ENCODE measurements at regions of chr12 and their contacts with region 1.

Region 1: GRCh38 chr12:104177663-104178501 is 37.7 kb upstream of the TXNRD1 start:
- DNase-seq: peak; percentile 87 to 88
- ATAC-seq: peak; percentile 89
- H3K4me3 ChIP-seq: no peak overlapping the region
- H3K27ac ChIP-seq: peak overlapping the region in 1 of 2 donors; percentile 62
- H3K4me1 ChIP-seq: peaks cover 0 to 5% of the 10 kb centered on the region in 2 donors
- H3K27me3 ChIP-seq: no peaks in the 10 kb centered on the region

Region 2: DNA sequence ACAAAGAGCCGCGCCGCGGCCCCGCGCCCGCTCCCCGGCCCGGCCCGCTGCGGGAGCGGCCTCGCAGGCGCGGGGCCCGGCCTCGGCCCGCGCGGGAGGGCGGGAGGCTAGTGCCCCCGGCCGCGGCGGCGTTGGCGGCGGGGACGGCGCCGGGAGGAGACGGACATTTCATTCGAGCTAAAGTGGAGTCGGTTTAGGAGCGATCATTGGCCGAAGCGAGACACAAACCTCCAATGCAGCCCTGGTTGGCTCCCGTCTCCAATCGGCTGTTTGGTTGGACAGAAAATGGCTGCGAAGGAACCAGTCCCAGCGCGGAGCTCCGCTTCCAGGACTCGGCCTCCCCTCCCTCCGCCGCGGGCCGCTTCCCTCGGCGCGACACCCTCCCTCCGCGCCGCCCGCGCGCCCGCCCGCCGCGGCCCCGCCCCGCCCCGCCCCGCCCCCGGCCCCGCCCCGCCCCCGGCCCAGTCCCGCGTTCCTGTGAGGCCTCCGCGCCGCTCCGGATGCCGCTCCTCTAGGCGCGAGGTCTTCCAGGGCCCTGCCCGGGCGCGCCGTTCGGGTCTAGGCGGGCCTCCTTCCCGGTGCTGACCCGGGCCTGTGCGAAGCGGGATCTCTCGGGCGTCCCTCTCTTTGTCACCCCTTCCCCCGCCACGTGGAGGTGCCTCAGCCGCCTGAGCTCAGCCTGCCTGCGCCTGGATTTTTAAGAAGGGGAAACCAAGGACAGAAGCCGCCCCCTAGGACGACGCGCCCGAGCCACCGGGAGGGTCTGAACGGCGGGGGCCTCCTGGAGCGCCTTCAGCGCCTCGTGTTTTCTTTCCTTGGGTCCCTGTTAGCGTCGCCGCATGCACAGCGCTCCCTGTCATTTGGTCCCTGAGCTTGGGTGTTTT is 39.7 kb before region 1 on chr12 and contains the start of gene NFYB:
- intact Hi-C with region 1: loop called (anchors 5 kb)
- DNase-seq: peak; percentile 95 to 97
- ATAC-seq: peak; percentile 95
- H3K4me3 ChIP-seq: peak within 1 kb of the TSS; percentile 88 to 99
- H3K27ac ChIP-seq: peak within 1 kb of the TSS; percentile 91 to 99
- H3K4me1 ChIP-seq: no peaks in the 10 kb centered on the region
- H3K27me3 ChIP-seq: no peaks in the 10 kb centered on the region
- total RNA-seq, gene NFYB: 44.1 to 59.2 TPM